Mammary epithelial cell (primary cell): ENCODE measurements at regions of chr3 and their contacts with region 1.

Region 1: DNA sequence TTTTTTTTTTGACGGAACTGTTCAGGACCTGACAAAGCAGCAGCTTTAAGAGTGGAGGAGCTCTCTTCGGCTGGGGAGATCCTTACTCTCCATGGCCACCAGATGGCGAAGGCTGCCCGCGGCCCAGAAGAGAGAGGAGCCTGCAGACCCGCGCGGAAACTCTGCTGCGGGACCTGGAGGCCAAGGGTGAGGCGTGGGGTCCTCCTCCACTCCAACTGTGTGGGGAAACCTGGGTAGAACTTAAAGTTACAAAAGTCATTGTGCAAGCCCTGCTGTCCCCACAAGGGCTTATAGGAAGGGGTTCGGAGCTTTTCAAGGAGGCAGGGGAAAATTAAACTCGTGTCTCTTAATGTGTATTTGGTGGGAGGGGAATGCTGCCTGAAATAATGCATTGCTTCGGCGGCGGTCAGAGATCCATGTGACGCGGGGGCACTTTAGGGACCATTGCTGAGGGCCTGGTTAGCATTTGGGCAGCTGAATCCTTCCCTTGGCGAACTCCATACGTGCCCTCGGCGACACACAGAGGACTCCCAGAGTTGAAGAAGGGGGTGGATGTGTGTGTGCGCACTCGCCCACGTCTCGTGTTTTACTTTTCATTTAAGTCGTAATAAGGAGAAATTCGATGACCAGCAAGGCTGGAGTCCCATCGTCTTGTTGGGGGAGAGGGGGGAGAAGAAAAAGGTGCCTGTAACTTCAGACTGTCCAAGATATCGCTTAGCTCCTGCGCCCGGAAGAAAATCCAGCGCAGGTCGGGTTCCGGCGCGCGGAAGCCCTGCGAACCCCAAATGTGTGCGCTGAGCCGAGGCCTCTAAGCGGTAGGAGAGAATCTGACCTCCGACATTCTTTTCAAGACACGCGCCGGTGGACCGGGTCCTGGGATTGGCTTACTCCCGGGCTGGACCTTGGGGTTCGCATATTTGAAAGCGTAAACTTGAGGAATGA is 9.7 kb downstream of the EOMES start:
- DNase-seq: peak; percentile 60
- H3K4me3 ChIP-seq: peak overlapping the region; percentile 48 to 56 (median 50)
- H3K27ac ChIP-seq: no peak overlapping the region
- H3K4me1 ChIP-seq: peaks cover 19% of the 10 kb centered on the region
- H3K27me3 ChIP-seq: no peaks in the 10 kb centered on the region
- CTCF ChIP-seq: peak; percentile 63 to 90

Region 2: GRCh38 chr3:27312044-27312668 is 400.3 kb before region 1 on chr3:
- CTCF ChIA-PET with region 1: no interaction called
- dilution Hi-C with region 1: no loop called
- in situ Hi-C with region 1: no loop called
- intact Hi-C with region 1: loop called (anchors 2 kb)
- DNase-seq: peak; percentile 65
- H3K4me3 ChIP-seq: no peak overlapping the region
- H3K27ac ChIP-seq: no peak overlapping the region
- H3K4me1 ChIP-seq: peaks cover 16% of the 10 kb centered on the region
- H3K27me3 ChIP-seq: no peaks in the 10 kb centered on the region
- CTCF ChIP-seq: peak; percentile 68 to 72

Region 3: GRCh38 chr3:28077572-28077971 is 365.2 kb after region 1 on chr3:
- CTCF ChIA-PET with region 1: no interaction called
- dilution Hi-C with region 1: no loop called
- in situ Hi-C with region 1: loop called in 1 of 2 experiments (anchors 25 kb)
- intact Hi-C with region 1: no loop called
- DNase-seq: peak; percentile 1
- H3K4me3 ChIP-seq: no peak overlapping the region
- H3K27ac ChIP-seq: no peak overlapping the region
- H3K4me1 ChIP-seq: no peaks in the 10 kb centered on the region
- H3K27me3 ChIP-seq: no peaks in the 10 kb centered on the region
- CTCF ChIP-seq: no peak

Region 4: GRCh38 chr3:28241221-28242160 is 529.1 kb after region 1 on chr3 and contains the start of gene CMC1:
- CTCF ChIA-PET with region 1: no interaction called
- dilution Hi-C with region 1: no loop called
- in situ Hi-C with region 1: no loop called
- intact Hi-C with region 1: loop called (anchors 2 kb)
- DNase-seq: peak; percentile 93
- H3K4me3 ChIP-seq: peak within 1 kb of the TSS; percentile 64 to 84 (median 81)
- H3K27ac ChIP-seq: peak within 1 kb of the TSS; percentile 60
- H3K4me1 ChIP-seq: peaks cover 7% of the 10 kb centered on the region
- H3K27me3 ChIP-seq: no peaks in the 10 kb centered on the region
- CTCF ChIP-seq: no peak
- total RNA-seq, gene CMC1: 5.2 to 19.3 TPM

Region 5: DNA sequence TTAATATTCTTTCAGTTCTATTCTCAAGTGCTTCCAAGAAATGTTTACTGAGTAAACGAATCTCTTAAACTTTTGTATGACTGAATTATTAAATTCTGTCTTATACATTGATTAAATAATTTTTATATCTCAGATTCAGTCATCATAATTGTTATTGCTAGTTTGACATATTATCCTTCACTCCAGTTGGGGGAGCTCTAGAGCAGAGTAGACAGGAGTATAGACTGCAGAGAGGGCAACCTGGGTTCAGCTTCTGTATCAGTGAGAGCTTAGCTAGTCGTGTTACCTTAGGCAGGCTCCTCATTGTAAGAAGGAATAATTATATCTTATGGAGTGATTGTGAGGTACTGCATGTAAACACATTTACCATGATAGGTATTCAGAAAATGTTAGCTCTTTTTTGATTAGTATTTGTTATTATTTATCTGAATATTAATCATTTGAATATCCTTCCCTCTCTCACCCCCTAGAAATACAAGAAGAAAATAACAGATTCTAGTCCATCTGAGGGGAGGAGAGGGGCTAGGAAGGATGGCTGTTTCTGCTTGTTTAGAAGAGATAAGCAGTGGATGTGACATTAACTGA is 605.1 kb after region 1 on chr3:
- CTCF ChIA-PET with region 1: interaction called, 6 read pairs
- dilution Hi-C with region 1: no loop called
- in situ Hi-C with region 1: loop called (anchors 25 kb)
- intact Hi-C with region 1: loop called (anchors 2 kb)
- DNase-seq: peak; percentile 39
- H3K4me3 ChIP-seq: no peak overlapping the region
- H3K27ac ChIP-seq: no peak overlapping the region
- H3K4me1 ChIP-seq: no peaks in the 10 kb centered on the region
- H3K27me3 ChIP-seq: no peaks in the 10 kb centered on the region
- CTCF ChIP-seq: peak; percentile 68 to 72